A549 (cell line): ENCODE measurements at regions of chr12 and their contacts with region 1.

Region 1: DNA sequence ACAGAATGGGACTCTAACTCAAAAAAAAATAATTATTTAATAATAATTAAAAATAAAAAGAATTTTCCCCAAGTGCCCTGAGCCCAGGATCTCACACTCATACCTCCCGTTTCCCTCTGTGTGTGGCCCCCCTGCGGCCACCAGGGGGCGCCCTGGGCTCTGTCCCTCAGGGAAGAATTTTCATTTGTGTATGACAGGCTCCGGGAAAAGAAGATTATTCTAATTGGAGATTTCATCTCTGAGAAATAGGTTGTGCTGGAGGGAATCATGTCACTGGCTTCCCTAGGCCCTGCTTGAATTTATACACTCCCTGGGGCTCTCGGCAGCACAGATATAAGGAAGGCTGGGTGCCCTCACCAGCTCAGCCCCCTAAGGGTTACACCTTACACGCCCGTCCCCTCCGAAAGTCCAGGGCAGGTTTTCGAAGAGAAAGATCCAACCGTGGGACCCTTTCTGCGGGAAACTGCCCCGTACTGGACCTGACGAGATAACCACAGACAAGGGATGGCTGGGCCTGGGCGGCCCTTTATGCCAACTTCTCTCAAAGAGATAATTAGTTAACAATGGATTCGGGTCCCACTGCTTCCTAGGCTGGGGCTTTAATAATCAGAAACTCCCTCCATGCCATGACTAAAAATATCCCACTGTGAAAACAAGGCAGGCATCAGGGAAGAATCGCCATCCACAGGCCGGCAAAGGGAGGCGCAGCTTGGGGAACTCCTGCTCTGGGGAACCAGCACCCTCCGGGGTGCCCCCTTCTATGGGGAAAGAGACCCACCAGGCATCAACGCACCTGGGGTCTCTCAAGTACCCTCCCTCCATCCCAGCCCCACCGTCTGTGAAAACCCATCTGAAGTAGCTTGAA is 80.7 kb downstream of the KDM2B start:
- DNase-seq: peak; percentile 65 to 92
- ATAC-seq: peak; percentile 89 to 95
- H3K4me3 ChIP-seq: no peak overlapping the region
- H3K27ac ChIP-seq: peak overlapping the region in 1 of 2 experiments; percentile 6; a peak in 1 of 6 replicates
- H3K4me1 ChIP-seq: 0 out of 3 replicates have a peak, but pooled peaks cover 3% of the 10 kb centered on the region
- CTCF ChIP-seq: peak; percentile 98
- EP300 ChIP-seq: no peak
- POLR2A ChIP-seq: no peak
- RAD21 ChIP-seq: peak; percentile 73 to 78

Region 2: GRCh38 chr12:121525411-121525810 is 25.2 kb after region 1 on chr12:
- CTCF ChIA-PET with region 1: interaction called, 10 read pairs
- POLR2A ChIA-PET with region 1: no interaction called
- DNase-seq: no peak
- ATAC-seq: no peak
- H3K4me3 ChIP-seq: no peak overlapping the region
- H3K27ac ChIP-seq: no peak overlapping the region
- H3K4me1 ChIP-seq: peaks cover 2% of the 10 kb centered on the region
- CTCF ChIP-seq: no peak
- EP300 ChIP-seq: no peak
- POLR2A ChIP-seq: no peak
- RAD21 ChIP-seq: no peak

Region 3: DNA sequence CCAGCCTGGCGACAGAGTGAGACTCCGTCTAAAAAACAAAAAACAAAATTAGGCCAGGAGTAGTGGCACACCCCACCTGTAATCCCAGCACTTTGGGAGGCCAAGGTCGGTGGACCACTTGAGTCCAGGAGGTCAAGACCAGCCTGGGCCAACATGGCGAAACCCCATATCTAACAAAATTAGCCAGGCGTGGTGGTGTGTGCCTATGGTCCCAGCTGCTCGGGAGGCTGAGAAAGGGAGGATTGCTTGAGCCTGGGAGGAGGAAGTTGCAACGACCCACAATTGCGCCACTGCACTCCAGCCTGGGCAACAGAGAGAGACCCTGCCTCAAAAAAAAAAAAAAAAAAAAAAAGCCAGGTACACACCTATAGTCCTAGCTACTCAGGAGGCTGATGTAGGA is 43.6 kb after region 1 on chr12:
- CTCF ChIA-PET with region 1: interaction called, 19 read pairs
- POLR2A ChIA-PET with region 1: no interaction called
- DNase-seq: no peak
- ATAC-seq: no peak
- H3K4me3 ChIP-seq: no peak overlapping the region
- H3K27ac ChIP-seq: no peak overlapping the region
- H3K4me1 ChIP-seq: peaks cover 3% of the 10 kb centered on the region; the same call in 1 of the 3 replicates
- CTCF ChIP-seq: no peak
- EP300 ChIP-seq: no peak
- POLR2A ChIP-seq: no peak
- RAD21 ChIP-seq: no peak

Region 4: DNA sequence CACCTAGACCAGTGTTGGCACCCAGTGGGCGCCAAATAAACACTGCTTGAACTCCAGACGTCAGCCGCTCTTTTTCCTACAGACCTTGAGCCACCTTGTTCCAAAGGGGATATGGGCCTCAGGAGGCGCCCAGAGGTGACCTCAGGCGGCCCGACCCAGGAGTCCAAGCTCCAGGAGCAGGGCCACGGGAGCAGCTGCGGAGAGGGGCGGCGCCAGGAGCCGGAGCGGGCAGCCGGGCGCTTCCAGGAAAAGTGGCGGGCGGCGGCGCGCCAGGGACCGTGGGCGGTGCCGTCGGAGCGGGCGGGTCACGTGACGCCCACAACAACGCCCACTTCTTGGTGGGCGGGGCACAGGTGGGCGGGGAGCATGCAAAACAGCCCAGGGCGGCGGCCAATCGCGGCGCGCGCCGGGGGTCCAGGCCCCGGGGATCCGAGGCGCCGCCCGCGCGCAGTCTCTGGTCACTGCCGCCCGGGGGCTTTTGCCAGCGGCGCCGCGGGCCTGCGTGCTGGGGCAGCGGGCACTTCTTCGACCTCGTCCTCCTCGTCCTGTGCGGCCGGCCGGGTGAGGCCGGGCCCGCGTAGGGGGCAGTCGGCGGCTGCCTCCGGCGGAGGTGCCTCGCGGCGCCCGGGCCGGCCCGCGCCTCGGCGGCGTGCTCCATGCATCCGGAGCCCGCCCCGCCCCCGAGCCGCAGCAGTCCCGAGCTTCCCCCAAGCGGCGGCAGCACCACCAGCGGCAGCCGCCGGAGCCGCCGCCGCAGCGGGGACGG is 126.1 kb after region 1 on chr12 and contains the start of gene ORAI1:
- CTCF ChIA-PET with region 1: interaction called, 14 read pairs
- POLR2A ChIA-PET with region 1: no interaction called
- DNase-seq: peak; percentile 80 to 96
- ATAC-seq: peak; percentile 80 to 87
- H3K4me3 ChIP-seq: peak within 1 kb of the TSS; percentile 67
- H3K27ac ChIP-seq: peak within 1 kb of the TSS; percentile 77 to 92
- H3K4me1 ChIP-seq: peaks cover 32% of the 10 kb centered on the region
- CTCF ChIP-seq: peak; percentile 22; the same call in 2 of the 3 replicates
- EP300 ChIP-seq: no peak
- POLR2A ChIP-seq: peak; percentile 85
- RAD21 ChIP-seq: 0 out of 5 replicates have a peak, but pooled peaks of 1 of the 2 experiments have one; percentile 7
- polyA plus RNA-seq, gene ORAI1: 22.1 and 26.6 TPM in 2 replicates

Region 5: DNA sequence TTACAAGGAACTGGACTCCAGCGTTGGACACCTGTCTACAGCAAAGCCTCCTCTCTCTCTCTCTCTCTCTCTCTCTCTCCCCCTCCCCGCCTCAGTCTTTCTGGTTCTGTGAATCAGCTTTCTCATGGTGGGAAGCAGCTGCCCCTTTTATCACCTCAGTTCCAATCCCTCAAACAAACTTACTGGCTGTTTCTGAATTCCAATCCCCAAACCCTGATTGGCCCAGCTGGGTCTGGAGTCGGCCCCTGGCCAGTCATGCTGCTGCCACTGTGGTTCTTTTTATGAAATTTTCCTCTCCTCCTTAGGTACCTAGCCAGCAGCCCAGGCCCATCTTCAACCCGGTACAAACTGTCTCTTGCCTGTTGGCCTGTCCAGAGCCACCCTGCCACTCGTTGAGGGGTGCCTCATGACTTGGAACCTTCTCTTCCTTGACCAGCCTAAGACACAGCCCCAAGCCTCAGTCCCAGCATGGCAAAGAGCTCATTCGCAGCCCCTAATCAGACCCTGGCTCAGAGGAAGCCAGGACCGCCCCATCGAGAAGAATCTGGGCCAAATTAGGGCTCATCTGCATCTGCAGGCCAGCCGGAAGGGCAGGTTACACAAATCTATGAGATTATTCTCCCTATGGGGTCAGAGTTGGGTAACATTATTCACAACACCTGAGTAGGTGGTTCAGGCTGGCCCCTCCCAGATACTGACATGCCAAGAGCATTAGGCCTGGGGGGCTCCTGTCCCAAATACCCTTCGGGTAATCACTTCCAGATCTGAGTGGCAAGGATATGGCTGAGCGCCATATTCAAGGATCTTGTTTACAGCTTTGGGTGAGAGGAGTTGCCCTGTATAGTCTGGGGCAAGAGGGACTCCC is 178.8 kb after region 1 on chr12:
- CTCF ChIA-PET with region 1: interaction called, 40 read pairs
- POLR2A ChIA-PET with region 1: no interaction called
- DNase-seq: no peak
- ATAC-seq: peak; percentile 13 to 21; a peak in 3 of 6 replicates
- H3K4me3 ChIP-seq: no peak overlapping the region
- H3K27ac ChIP-seq: no peak overlapping the region
- H3K4me1 ChIP-seq: no peaks in the 10 kb centered on the region
- CTCF ChIP-seq: no peak
- EP300 ChIP-seq: no peak
- POLR2A ChIP-seq: no peak
- RAD21 ChIP-seq: no peak

Region 6: DNA sequence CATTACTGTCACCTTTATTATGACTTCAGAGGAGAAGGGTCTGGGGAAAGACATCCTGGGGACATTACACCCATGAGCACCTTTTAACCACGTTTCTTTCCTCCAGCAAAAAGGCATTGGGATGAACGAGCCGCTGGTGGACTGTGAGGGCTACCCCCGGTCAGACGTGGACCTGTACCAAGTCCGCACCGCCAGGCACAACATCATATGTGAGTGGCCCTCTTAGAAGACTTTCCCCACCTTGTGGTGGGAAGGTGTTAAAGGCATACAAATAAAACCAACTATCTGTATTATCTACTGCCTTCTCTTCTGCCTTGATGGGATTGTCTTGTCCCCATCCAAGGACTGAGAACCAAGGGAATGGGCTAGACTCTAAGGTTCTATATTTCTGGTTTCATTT is 394.5 kb after region 1 on chr12:
- CTCF ChIA-PET with region 1: no interaction called
- POLR2A ChIA-PET with region 1: no interaction called
- DNase-seq: peak; percentile 49 to 72
- ATAC-seq: peak; percentile 70 to 85
- H3K4me3 ChIP-seq: no peak overlapping the region
- H3K27ac ChIP-seq: peak overlapping the region in 1 of 2 experiments; percentile 67; a peak in 1 of 6 replicates
- H3K4me1 ChIP-seq: peaks cover 30% of the 10 kb centered on the region
- CTCF ChIP-seq: peak; percentile 37
- EP300 ChIP-seq: no peak
- POLR2A ChIP-seq: no peak
- RAD21 ChIP-seq: peak in 1 of 2 experiments; percentile 34; a peak in 1 of 5 replicates